Activated naive CD8-positive, alpha-beta T cell treated with anti-CD3 and anti-CD28 coated beads, Interleukin-2, amount 10 ng/mL, durations not matched to agents 7 days and 5 days (primary cell): ENCODE measurements at regions of chr7 and their contacts with region 1.

Region 1: GRCh38 chr7:5557920-5558401 is 134.3 kb upstream of the TNRC18 start:
- DNase-seq: peak; percentile 60
- ATAC-seq: peak; percentile 3
- H3K4me3 Mint-ChIP-seq: peak overlapping the region; percentile 82
- H3K27ac Mint-ChIP-seq: peak overlapping the region; percentile 89
- H3K4me1 Mint-ChIP-seq: peaks cover 40% of the 10 kb centered on the region
- H3K27me3 Mint-ChIP-seq: peaks cover 7% of the 10 kb centered on the region

Region 2: DNA sequence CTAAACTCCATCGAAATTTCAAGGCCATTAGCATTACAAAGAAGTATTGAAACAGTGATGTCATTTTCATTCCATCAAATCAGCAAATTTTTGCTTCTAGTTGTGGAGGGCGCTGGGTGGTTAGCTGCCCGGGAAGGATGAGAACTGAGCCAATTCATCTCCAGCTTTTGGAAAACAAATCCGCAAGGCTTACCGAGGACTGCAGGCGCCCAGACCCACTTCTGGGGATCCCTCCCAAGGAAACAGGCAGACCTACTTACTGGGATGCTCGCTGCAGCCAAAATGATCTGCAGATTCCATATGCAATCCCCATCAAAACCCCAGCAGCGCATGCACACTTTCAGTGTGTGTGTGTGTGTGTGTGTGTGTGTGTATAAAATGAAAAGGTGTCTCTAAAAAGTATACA is 153.5 kb before region 1 on chr7:
- POLR2A ChIA-PET with region 1: no interaction called
- DNase-seq: no peak
- ATAC-seq: no peak
- H3K4me3 Mint-ChIP-seq: no peak overlapping the region
- H3K27ac Mint-ChIP-seq: no peak overlapping the region
- H3K4me1 Mint-ChIP-seq: peaks cover 2% of the 10 kb centered on the region
- H3K27me3 Mint-ChIP-seq: peaks cover 17% of the 10 kb centered on the region

Region 3: DNA sequence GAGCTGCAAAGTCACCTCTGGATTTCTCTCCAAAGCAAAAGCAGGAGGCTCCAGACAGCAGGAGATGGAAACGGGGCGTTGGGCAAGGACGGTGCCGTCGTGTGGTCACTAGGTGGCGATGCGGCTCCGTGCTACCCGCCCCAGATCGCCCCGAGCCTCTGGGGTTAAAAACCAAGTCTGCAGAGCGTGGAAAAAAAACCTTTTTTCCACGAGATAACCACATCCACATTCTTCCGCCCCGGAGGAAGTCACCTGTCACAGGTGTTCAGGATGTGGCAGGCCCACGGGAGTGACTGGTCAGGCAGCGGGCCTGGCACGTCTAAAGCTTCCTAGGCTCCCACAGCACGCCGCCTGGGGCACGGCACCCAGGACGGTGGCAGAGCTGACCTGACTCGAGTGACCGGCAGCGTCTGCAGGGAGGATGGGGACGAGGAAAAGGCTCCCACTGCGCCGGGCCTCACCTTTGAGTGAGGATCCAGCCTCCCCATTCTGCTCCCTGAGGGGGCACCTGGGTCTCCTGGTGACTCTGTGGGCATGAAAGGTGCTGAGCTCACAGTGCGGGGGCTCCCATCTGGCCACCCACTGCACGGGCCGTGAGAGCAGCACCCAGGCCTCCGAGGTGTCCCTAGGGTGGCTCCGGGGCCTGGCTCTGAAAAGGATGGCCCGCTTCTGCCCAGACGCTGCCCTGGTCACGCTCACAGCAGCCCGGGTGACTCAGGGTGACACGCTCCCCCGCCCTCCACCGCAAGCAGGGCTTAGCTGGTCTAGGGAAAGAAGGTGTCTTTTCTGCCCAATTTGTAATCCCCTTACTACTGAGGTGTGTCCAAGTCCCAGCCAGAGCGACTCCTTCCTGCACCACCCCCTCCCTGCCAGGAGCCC is 63.0 kb before region 1 on chr7:
- POLR2A ChIA-PET with region 1: interaction called, 17 read pairs
- DNase-seq: peak; percentile 85
- ATAC-seq: peak; percentile 73
- H3K4me3 Mint-ChIP-seq: peak overlapping the region; percentile 28
- H3K27ac Mint-ChIP-seq: no peak overlapping the region
- H3K4me1 Mint-ChIP-seq: peaks cover 27% of the 10 kb centered on the region
- H3K27me3 Mint-ChIP-seq: no peaks in the 10 kb centered on the region